A673 (cell line): ENCODE measurements at regions of chr5 and their contacts with region 1.

Region 1: DNA sequence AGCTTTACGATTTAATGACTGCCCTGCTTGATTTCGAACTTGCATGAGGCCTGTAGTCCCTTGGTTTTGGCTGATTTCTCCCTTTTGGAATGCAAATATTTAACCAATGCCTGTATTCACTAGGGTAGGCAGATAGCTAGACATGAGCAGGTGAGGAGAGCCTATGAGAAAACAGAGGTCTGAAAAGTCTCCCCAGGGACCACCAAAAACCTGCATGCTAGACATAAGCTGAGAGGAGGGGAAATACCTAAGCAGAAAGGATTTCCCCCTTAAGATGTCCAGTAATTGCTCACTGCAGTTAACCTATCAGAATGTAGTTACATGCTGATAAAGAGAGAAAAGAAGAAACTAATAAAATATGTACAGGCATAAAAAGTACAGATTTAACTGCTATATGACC is 667.4 kb upstream of the SEMA6A start:
- DNase-seq: no peak
- H3K4me3 ChIP-seq: no peak overlapping the region
- H3K27ac ChIP-seq: no peak overlapping the region
- H3K4me1 ChIP-seq: no peaks in the 10 kb centered on the region
- H3K27me3 ChIP-seq: no peaks in the 10 kb centered on the region
- CTCF ChIP-seq: no peak

Region 2: DNA sequence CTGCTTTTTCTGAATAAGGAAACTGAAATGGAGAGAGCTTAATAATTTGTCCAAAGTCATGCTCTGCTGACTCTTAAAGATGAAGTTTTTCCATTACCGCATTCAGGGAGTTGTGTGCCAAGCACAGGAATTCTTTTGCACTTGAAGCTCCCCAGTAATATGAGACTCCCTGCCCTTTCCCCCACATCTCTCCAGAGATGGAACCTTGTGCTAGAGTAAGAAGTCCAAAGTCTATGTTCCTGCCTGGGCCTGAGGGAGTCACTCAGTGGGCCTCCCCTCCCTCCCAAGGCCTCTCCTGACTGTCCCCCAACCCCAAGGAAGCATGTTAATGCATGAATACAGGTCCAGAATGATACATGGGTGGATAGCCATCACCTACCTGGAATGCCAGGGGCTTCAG is 494.1 kb before region 1 on chr5:
- CTCF ChIA-PET with region 1: no interaction called
- POLR2A ChIA-PET with region 1: no interaction called
- intact Hi-C with region 1: no loop called
- DNase-seq: no peak
- H3K4me3 ChIP-seq: no peak overlapping the region
- H3K27ac ChIP-seq: no peak overlapping the region
- H3K4me1 ChIP-seq: no peaks in the 10 kb centered on the region
- H3K27me3 ChIP-seq: no peaks in the 10 kb centered on the region
- CTCF ChIP-seq: no peak

Region 3: DNA sequence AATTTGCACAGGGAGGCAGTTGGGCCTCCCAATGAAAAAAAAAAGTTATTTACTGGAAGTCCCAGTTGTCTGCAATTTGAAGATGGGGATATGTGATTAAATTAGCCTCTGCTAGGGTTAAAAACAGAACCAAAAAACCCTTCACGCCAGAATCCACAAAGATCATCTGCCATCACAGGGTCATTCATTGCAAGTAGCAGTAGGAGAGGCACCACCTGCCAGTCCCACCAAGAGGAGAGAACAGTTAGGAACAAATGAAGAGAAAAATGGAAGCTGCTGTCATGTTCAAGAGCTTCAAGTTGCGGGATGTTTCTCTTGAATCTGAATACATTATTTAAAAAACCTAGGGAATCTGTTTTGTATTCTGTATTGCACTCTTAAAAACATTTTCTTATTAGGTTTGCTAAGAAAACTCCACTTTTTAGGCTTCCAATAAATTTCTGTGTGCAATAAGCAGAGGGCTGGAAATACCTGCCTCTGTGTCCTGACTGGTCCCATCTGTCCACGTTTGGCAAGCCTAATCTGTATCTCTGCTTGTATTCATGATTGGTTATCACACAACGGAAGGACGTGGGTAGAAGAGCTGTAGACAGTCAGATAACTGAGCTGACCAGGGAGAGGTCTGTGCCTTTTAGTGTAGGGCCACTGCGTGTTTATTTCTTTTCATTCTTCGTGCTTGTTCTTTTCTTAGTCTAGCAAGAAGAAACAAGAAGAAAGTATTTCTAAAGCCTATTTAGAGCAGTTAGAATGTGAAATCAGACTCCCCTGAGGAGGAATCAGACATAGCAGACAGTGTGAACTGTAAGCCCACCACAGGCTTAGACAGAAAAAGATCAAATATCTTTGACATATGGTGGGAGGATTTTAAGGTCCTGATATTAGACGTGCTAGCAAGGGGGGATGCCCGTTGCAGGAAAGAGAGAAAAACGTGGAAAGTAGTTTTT is 36.8 kb before region 1 on chr5:
- CTCF ChIA-PET with region 1: no interaction called
- POLR2A ChIA-PET with region 1: no interaction called
- intact Hi-C with region 1: loop called (anchors 1 kb)
- DNase-seq: no peak
- H3K4me3 ChIP-seq: no peak overlapping the region
- H3K27ac ChIP-seq: no peak overlapping the region
- H3K4me1 ChIP-seq: no peaks in the 10 kb centered on the region
- H3K27me3 ChIP-seq: no peaks in the 10 kb centered on the region
- CTCF ChIP-seq: no peak

Region 4: DNA sequence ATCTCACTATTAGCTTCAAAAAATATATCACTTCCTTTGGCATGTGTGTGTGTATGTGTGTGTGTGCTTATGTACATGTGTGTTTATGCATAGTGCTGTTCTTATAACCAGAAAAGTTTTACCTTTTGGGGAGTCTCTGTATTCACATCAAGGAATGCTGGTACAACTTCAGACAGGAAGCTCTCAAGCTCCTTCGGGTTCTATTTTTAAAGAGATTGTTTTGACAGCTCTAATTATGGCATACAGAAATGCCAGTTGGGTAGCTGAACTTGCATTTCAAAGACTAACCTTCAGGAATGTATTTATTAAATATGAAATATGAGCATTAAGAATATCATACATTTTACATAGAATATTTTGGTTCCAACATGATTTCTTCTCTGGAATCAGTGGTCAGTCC is 1583.2 kb after region 1 on chr5:
- CTCF ChIA-PET with region 1: no interaction called
- POLR2A ChIA-PET with region 1: no interaction called
- intact Hi-C with region 1: no loop called
- DNase-seq: no peak
- H3K4me3 ChIP-seq: no peak overlapping the region
- H3K27ac ChIP-seq: no peak overlapping the region
- H3K4me1 ChIP-seq: no peaks in the 10 kb centered on the region
- H3K27me3 ChIP-seq: no peaks in the 10 kb centered on the region
- CTCF ChIP-seq: no peak